Aorta (tissue), 5 donors: ENCODE measurements at regions of chr20 and their contacts with region 1.

Region 1: DNA sequence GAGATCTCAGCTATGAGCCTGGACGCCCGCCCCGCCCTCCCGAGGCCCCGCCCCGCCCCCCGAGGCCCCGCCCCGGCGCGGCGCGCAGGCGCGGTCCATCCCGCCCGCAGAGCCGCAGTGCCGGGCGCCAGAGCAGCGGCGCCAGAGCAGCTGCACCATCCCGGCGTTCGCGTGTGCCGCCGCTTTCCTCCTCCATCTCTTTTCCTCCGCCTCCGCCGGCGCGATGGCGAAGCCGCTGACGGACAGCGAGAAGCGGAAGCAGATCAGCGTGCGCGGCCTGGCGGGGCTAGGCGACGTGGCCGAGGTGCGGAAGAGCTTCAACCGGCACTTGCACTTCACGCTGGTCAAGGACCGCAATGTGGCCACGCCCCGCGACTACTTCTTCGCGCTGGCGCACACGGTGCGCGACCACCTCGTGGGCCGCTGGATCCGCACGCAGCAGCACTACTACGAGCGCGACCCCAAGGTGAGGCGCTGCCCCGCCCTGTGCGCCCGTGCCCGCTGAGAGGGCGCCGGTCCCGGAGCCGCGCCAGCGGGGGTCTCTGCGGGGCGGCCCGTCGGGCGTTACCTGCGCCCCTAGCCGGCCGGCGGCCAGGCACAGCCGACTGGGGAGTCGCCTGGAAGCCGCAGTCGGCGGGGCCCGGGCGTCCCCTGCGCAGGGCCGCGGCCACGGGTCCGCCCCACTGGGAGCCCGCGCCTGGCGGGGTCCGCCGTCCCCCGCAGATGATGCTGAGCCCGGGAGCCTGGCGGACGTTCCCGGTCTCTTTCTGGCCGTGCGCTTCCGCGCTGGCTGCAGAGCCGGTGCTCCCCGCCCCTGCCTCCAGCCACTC is at the start of gene PYGB:
- DNase-seq: peak; percentile 88 to 92
- ATAC-seq: peak; percentile 92
- H3K4me3 ChIP-seq: peak within 1 kb of the TSS; percentile 82 to 90
- H3K27ac ChIP-seq: peak within 1 kb of the TSS; percentile 62 to 83
- H3K4me1 ChIP-seq: no peaks in the 10 kb centered on the region
- H3K27me3 ChIP-seq: no peaks in the 10 kb centered on the region
- total RNA-seq, gene PYGB: 92.8 to 95.2 TPM

Region 2: DNA sequence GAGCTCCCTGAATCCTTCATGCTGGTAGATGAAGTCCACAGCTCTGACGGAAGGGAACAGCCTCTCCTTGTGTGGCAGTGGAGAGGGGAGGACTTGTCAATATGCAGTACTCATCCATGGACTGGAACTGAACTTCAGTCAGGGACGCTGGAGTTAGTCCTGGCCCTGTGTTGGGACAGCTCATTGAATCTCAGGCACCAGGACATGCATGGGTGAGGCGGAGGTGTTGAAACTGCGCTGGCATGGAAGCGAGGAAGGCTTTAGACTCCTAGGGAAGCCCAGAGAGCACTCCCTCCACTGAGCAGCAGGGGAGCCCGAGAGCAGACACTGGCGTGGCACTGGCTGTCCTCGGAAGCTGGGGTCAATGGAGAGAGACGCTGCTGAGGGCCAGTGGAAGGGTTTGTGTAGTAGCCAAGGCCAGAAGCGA is 1098.3 kb before region 1 on chr20:
- intact Hi-C with region 1: no loop called
- DNase-seq: no peak
- ATAC-seq: no peak
- H3K4me3 ChIP-seq: no peak overlapping the region
- H3K27ac ChIP-seq: no peak overlapping the region
- H3K4me1 ChIP-seq: no peaks in the 10 kb centered on the region
- H3K27me3 ChIP-seq: no peaks in the 10 kb centered on the region

Region 3: DNA sequence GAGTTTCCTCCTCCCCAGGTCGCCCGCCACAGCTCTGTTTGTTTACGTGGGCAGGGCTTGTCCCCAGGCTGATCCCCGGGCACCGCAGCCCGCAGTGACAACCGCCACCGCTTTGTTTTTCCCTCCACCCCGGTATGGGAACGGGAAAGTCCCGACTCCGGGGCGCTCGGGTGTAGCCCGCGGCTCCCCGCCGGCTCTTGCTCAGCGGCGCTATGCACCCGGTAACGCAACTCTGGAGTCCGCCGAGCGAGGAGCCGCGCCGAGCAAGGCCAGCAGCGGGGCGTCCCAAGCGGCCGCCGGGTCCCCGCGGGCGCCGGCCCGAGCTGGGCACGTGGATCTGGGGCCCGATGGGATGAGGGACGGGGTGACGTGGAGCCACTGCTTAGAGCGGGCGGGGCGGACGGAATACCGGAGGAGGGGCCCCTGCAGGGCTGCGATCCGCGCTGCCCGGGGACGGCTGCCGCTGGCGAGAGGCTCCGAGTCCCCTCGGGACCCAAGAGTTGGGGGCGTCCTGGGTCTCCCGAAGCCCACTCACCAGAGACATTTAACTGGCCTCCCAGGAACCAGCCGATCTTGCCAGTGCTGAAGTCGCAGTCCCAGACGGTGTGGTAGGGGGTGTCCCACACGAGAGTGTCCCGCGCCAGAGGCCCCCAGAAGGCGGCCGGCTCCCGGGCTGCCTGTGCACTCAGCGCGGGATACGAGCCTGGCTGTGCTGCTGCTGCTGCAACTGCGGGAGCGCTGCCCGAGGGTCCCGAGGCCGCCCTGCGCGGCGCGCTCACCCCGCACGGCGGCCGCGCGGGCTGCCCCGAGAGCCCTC is 190.7 kb before region 1 on chr20:
- intact Hi-C with region 1: loop called in 1 of 2 experiments (anchors 5 kb)
- DNase-seq: peak; percentile 89 to 91
- ATAC-seq: peak; percentile 84
- H3K4me3 ChIP-seq: peak overlapping the region; percentile 68 to 78
- H3K27ac ChIP-seq: peak overlapping the region in 1 of 2 donors; percentile 82
- H3K4me1 ChIP-seq: peaks cover 4 to 8% of the 10 kb centered on the region in 2 donors
- H3K27me3 ChIP-seq: no peaks in the 10 kb centered on the region

Region 4: DNA sequence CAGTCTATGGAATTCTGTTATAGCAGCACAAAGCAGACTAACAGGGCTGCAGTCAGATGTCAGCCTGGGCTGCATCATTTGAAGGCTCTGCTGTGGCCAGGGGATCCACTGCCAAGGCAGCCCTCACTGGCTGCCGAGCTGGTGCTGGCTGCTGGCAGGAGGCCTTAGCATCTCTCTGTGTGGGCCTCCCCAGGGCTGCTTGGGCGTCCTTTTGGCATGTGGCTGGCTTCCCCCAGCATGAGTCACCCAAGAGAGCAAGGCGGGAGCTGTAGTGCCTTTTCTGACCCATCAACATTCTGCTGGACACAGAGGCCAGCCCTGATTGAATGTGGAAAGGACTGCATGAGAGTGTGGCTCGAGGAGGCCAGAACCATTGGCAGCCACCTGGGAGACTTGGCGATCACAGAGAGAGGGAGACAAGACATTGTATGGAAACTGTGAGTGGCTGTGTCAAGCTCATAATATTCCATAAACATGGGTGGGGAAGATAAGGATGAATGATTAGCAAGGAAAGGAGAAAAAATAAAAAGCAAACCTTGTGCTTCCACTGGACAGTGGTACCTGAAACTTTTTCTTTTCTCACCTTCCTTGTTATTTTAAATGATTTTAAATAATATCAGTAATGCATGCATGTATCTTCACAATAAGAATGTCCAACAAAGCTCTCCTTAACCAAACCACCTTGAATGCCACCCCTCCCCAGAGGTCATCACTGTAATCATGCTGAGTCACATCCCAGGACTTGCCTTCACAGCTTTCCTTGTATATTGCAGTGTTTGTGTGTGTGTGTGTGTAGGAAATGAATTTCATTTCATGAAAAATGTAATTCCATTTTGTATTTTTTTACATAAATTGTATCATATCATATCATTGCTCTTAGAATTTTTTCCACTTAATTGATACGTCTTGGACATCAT is 111.3 kb before region 1 on chr20:
- intact Hi-C with region 1: loop called in 1 of 2 experiments (anchors 5 kb)
- DNase-seq: peak; percentile 93
- ATAC-seq: peak; percentile 89
- H3K4me3 ChIP-seq: no peak overlapping the region
- H3K27ac ChIP-seq: no peak overlapping the region
- H3K4me1 ChIP-seq: no peaks in the 10 kb centered on the region
- H3K27me3 ChIP-seq: no peaks in the 10 kb centered on the region

Region 5: GRCh38 chr20:25195014-25195961 is 52.9 kb before region 1 on chr20 and contains the start of gene ENTPD6:
- intact Hi-C with region 1: loop called (anchors 2 kb)
- DNase-seq: peak; percentile 95 to 97
- ATAC-seq: peak; percentile 97
- H3K4me3 ChIP-seq: peak within 1 kb of the TSS; percentile 69 to 77
- H3K27ac ChIP-seq: peak within 1 kb of the TSS in 1 of 2 donors; percentile 43
- H3K4me1 ChIP-seq: peaks cover 0 to 3% of the 10 kb centered on the region in 2 donors
- H3K27me3 ChIP-seq: no peaks in the 10 kb centered on the region
- total RNA-seq, gene ENTPD6: 68.8 to 69.8 TPM

Region 6: GRCh38 chr20:25237610-25238318 is 10.4 kb before region 1 on chr20:
- intact Hi-C with region 1: loop called in 1 of 2 experiments (anchors 1 kb)
- DNase-seq: peak in 1 of 2 donors; percentile 84
- ATAC-seq: peak; percentile 94
- H3K4me3 ChIP-seq: no peak overlapping the region
- H3K27ac ChIP-seq: peak overlapping the region; percentile 57 to 83
- H3K4me1 ChIP-seq: no peaks in the 10 kb centered on the region
- H3K27me3 ChIP-seq: no peaks in the 10 kb centered on the region

Region 7: GRCh38 chr20:25390538-25391528 is 142.7 kb after region 1 on chr20 and contains the start of gene ABHD12:
- intact Hi-C with region 1: loop called in 1 of 2 experiments (anchors 5 kb)
- DNase-seq: peak; percentile 98 to 99
- ATAC-seq: peak; percentile 99
- H3K4me3 ChIP-seq: peak within 1 kb of the TSS; percentile 70 to 76
- H3K27ac ChIP-seq: peak within 1 kb of the TSS in 1 of 2 donors; percentile 81
- H3K4me1 ChIP-seq: no peaks in the 10 kb centered on the region
- H3K27me3 ChIP-seq: no peaks in the 10 kb centered on the region
- total RNA-seq, gene ABHD12: 31.6 to 32.3 TPM

Region 8: DNA sequence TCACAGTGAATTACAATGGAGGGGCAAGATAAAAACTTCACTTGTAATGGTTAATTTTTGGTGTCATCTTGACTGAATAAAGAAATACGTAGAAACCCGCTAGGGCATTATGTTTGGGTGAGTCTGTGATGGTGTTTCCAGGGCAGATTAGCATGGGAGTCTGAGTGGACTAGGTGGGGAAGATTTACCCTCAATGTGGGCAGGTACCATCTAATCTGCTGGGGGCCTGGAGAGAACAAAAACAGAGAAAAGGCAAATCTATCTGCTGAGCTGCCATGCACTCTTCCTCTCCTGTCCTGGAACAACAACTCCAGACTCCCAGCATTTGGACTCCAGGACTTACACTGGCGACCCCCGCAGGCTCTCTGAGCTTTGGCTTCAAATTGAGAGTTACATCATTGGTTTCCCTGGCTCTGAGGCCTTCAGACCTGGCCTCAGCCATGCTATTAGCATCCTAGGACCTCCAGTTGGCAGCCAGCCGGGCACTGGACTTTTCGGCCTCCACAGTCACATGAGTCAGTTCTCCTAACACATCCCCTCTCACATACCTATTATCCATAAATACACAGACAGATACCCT is 317.5 kb after region 1 on chr20:
- intact Hi-C with region 1: no loop called
- DNase-seq: no peak
- ATAC-seq: no peak
- H3K4me3 ChIP-seq: no peak overlapping the region
- H3K27ac ChIP-seq: no peak overlapping the region
- H3K4me1 ChIP-seq: no peaks in the 10 kb centered on the region
- H3K27me3 ChIP-seq: no peaks in the 10 kb centered on the region